CD8-positive, alpha-beta memory T cell (primary cell): ENCODE measurements at regions of chrX and their contacts with region 1.

Region 1: GRCh38 chrX:149539283-149540130 is 1.3 kb upstream of the EOLA1 start:
- DNase-seq: peak; percentile 83 to 94 (median 83)
- H3K4me3 ChIP-seq: peak overlapping the region; percentile 49
- H3K4me3 Mint-ChIP-seq: peak overlapping the region; percentile 67 to 96 (median 90)
- H3K27ac ChIP-seq: peak overlapping the region; percentile 57
- H3K27ac Mint-ChIP-seq: peak overlapping the region; percentile 79 to 96 (median 92)
- H3K4me1 ChIP-seq: peaks cover 6% of the 10 kb centered on the region
- H3K4me1 Mint-ChIP-seq: peaks cover 9 to 13% (median 12%) of the 10 kb centered on the region in 3 donors
- H3K27me3 ChIP-seq: no peaks in the 10 kb centered on the region
- H3K27me3 Mint-ChIP-seq: no peaks in the 10 kb centered on the region

Region 2: DNA sequence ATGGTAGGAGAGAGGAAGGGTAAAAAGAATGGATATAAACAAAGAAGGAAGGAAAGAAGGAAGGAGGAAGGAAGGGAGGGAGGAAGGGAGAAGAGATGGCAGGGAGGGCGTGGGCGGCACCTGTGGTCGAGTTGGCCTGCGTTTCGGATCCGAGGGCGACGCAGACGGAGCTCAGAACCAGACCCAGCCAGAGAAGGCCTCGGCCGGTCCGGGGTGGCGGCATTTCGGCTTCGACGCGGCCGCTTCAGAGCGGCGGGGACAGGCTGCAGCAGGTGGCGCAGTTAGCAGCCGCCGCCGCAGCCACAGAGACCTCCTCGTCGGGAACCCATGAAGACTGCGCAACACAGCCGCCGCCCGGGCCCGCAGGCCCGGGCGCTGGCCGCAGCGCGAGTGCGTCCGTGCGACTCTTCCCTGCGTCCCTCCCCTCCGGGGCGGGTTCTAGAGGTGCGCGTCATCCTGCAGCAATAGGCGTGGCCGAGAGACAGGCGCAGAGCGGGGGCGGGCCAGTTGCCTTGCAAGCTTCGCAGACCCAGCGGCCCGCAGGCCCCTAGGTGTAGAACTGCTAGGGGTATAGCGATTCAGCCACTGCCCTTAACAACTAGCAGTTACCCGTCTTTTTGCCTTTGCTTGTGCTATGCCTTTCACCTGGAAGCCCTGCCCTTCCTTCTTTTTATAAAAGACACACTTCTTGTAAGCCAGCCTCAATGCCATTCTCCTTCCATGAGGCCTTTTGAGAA is 34.4 kb before region 1 on chrX and contains the start of gene IDS:
- CTCF ChIA-PET with region 1: interaction called, 25 read pairs
- POLR2A ChIA-PET with region 1: interaction called, 25 read pairs
- DNase-seq: peak; percentile 81 to 95 (median 84)
- H3K4me3 ChIP-seq: peak within 1 kb of the TSS; percentile 85
- H3K4me3 Mint-ChIP-seq: peak within 1 kb of the TSS; percentile 86 to 99 (median 93)
- H3K27ac ChIP-seq: peak within 1 kb of the TSS; percentile 99
- H3K27ac Mint-ChIP-seq: peak within 1 kb of the TSS; percentile 94 to 100 (median 99)
- H3K4me1 ChIP-seq: peaks cover 33% of the 10 kb centered on the region
- H3K4me1 Mint-ChIP-seq: peaks cover 21 to 36% (median 34%) of the 10 kb centered on the region in 3 donors
- H3K27me3 ChIP-seq: no peaks in the 10 kb centered on the region
- H3K27me3 Mint-ChIP-seq: peaks cover 0 to 16% of the 10 kb centered on the region in 2 donors
- total RNA-seq, gene IDS: 84.6 to 86.0 TPM

Region 3: GRCh38 chrX:149512225-149512885 is 27.2 kb before region 1 on chrX:
- CTCF ChIA-PET with region 1: interaction called, 34 read pairs
- POLR2A ChIA-PET with region 1: interaction called, 6 read pairs
- DNase-seq: peak; percentile 42 to 71 (median 54)
- H3K4me3 ChIP-seq: no peak overlapping the region
- H3K4me3 Mint-ChIP-seq: peak overlapping the region in 4 of 7 donors; percentile 41 to 57 (median 48)
- H3K27ac ChIP-seq: no peak overlapping the region
- H3K27ac Mint-ChIP-seq: peak overlapping the region; percentile 87 to 96 (median 94)
- H3K4me1 ChIP-seq: peaks cover 33% of the 10 kb centered on the region
- H3K4me1 Mint-ChIP-seq: peaks cover 29 to 45% (median 38%) of the 10 kb centered on the region in 3 donors
- H3K27me3 ChIP-seq: no peaks in the 10 kb centered on the region
- H3K27me3 Mint-ChIP-seq: peaks cover 0 to 6% of the 10 kb centered on the region in 2 donors

Region 4: GRCh38 chrX:149527705-149528104 is 11.8 kb before region 1 on chrX:
- CTCF ChIA-PET with region 1: interaction called, 4 read pairs
- POLR2A ChIA-PET with region 1: interaction called, 11 read pairs
- DNase-seq: peak in 3 of 5 donors; percentile 36 to 53 (median 52)
- H3K4me3 ChIP-seq: no peak overlapping the region
- H3K4me3 Mint-ChIP-seq: peak overlapping the region in 5 of 7 donors; percentile 10 to 74 (median 22)
- H3K27ac ChIP-seq: no peak overlapping the region
- H3K27ac Mint-ChIP-seq: peak overlapping the region; percentile 43 to 98 (median 84)
- H3K4me1 ChIP-seq: peaks cover 27% of the 10 kb centered on the region
- H3K4me1 Mint-ChIP-seq: peaks cover 9 to 35% (median 23%) of the 10 kb centered on the region in 3 donors
- H3K27me3 ChIP-seq: no peaks in the 10 kb centered on the region
- H3K27me3 Mint-ChIP-seq: no peaks in the 10 kb centered on the region

Region 5: GRCh38 chrX:149938427-149939270 is 399.1 kb after region 1 on chrX and contains the start of gene EOLA2:
- CTCF ChIA-PET with region 1: interaction called, 13 read pairs
- POLR2A ChIA-PET with region 1: interaction called, 23 read pairs
- DNase-seq: peak; percentile 85 to 96 (median 91)
- H3K4me3 ChIP-seq: peak within 1 kb of the TSS; percentile 73
- H3K4me3 Mint-ChIP-seq: peak within 1 kb of the TSS; percentile 84 to 98 (median 92)
- H3K27ac ChIP-seq: peak within 1 kb of the TSS; percentile 91
- H3K27ac Mint-ChIP-seq: peak within 1 kb of the TSS; percentile 87 to 100 (median 96)
- H3K4me1 ChIP-seq: peaks cover 6% of the 10 kb centered on the region
- H3K4me1 Mint-ChIP-seq: peaks cover 4 to 11% (median 6%) of the 10 kb centered on the region in 3 donors
- H3K27me3 ChIP-seq: no peaks in the 10 kb centered on the region
- H3K27me3 Mint-ChIP-seq: no peaks in the 10 kb centered on the region
- total RNA-seq, gene EOLA2: 64.1 to 66.1 TPM